H1 (cell line): ENCODE measurements at regions of chr2 and their contacts with region 1.

Region 1: DNA sequence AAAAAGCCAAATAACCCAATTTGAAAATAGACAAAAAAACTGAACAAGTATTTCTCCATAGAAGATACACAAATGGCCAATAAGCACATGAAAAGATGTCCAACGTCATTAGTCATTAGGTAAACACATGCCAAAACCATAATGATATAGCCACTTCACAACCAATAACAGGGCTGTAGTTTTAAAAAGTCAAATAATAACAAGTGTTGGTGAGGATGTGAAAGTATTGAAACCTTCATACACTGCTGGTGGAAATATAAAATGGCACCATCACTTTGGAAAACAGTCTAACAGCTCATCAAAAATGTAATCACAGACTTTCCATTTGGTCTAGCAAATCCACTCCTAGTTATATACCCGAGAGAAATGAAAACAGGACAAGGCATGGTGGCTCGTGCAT is 144.2 kb upstream of the CYP1B1 start:
- DNase-seq: no peak
- H3K4me3 ChIP-seq: no peak overlapping the region
- H3K27ac ChIP-seq: no peak overlapping the region
- H3K4me1 ChIP-seq: peaks cover 1 to 10% (median 2%) of the 10 kb centered on the region in 4 experiments; a peak in 5 of 7 replicates
- H3K27me3 ChIP-seq: no peaks in the 10 kb centered on the region
- CTCF ChIP-seq: no peak
- EP300 ChIP-seq: no peak
- POLR2A ChIP-seq: no peak
- RAD21 ChIP-seq: no peak

Region 2: DNA sequence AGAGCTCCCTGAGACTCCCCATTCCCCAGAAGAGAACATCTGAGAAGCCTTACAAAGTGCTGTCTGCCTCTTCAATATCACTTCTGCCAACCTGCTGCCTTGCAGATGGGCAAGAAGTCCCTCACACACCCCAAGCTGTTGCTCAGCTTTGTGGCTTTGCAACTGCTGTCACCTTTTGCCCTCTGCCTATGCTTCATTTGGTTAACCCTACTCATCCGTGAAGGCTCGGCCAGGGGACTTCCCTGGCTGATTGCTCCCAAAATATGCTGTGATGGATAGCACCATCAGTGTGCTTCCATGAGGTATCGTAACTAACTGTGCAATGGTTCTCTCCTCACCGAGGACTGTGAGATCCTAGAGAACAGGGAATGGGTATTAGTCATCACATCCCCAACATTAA is 55.3 kb before region 1 on chr2:
- CTCF ChIA-PET with region 1: no interaction called
- POLR2A ChIA-PET with region 1: no interaction called
- DNase-seq: no peak
- H3K4me3 ChIP-seq: no peak overlapping the region
- H3K27ac ChIP-seq: no peak overlapping the region
- H3K4me1 ChIP-seq: peaks cover 0 to 3% (median under 1%) of the 10 kb centered on the region in 4 experiments; a peak in 2 of 7 replicates
- H3K27me3 ChIP-seq: peaks cover 0 to 1% (median 0%) of the 10 kb centered on the region in 4 experiments; a peak in 1 of 7 replicates
- CTCF ChIP-seq: no peak
- EP300 ChIP-seq: no peak
- POLR2A ChIP-seq: no peak
- RAD21 ChIP-seq: no peak

Region 3: DNA sequence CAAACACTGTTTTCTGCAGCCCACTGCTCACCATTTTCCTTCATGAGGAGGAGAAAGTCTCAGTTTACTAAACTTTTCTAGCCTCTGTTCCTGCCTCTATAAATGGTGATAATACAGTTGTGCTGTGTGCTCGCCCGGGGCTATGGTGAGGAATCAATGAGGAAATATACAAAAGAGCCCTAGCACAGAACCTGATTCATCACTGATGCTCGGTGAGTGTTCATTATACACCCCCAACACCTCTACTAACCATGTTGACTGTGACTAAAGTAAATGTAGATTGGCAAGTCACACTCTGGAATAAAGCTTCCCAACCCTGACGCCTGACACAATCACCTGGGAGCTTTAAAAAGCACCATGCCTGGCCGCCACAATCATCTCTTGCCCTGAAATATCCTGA is 25.4 kb before region 1 on chr2:
- CTCF ChIA-PET with region 1: no interaction called
- POLR2A ChIA-PET with region 1: no interaction called
- DNase-seq: no peak
- H3K4me3 ChIP-seq: no peak overlapping the region
- H3K27ac ChIP-seq: no peak overlapping the region
- H3K4me1 ChIP-seq: peaks cover 0 to 5% (median 3%) of the 10 kb centered on the region in 4 experiments; a peak in 4 of 7 replicates
- H3K27me3 ChIP-seq: peaks cover 0 to 1% (median 0%) of the 10 kb centered on the region in 4 experiments; a peak in 1 of 7 replicates
- CTCF ChIP-seq: no peak
- EP300 ChIP-seq: no peak
- POLR2A ChIP-seq: no peak
- RAD21 ChIP-seq: no peak

Region 4: DNA sequence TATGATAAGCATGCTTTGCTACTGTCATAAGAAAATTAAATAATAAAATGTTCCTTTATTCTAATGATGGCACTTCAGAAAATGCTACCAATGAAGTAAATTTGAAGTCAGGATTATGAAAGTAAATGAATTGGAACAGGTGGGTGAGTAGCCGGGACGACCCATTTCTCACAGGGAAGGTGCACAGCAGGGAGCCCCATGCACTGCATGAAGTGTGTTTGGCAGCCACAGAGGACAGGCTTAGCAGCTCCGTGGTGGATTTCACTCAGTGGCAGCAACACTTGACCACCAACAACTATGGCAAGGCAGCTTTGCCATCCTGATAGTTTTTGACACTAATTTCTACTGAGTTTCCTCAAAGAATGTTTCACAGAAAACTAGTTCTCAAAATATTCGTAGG is 10.6 kb after region 1 on chr2:
- CTCF ChIA-PET with region 1: interaction called, 11 read pairs
- POLR2A ChIA-PET with region 1: interaction called, 3 read pairs
- DNase-seq: no peak
- H3K4me3 ChIP-seq: no peak overlapping the region
- H3K27ac ChIP-seq: no peak overlapping the region
- H3K4me1 ChIP-seq: no peaks in the 10 kb centered on the region
- H3K27me3 ChIP-seq: no peaks in the 10 kb centered on the region
- CTCF ChIP-seq: no peak
- EP300 ChIP-seq: no peak
- POLR2A ChIP-seq: no peak
- RAD21 ChIP-seq: no peak

Region 5: DNA sequence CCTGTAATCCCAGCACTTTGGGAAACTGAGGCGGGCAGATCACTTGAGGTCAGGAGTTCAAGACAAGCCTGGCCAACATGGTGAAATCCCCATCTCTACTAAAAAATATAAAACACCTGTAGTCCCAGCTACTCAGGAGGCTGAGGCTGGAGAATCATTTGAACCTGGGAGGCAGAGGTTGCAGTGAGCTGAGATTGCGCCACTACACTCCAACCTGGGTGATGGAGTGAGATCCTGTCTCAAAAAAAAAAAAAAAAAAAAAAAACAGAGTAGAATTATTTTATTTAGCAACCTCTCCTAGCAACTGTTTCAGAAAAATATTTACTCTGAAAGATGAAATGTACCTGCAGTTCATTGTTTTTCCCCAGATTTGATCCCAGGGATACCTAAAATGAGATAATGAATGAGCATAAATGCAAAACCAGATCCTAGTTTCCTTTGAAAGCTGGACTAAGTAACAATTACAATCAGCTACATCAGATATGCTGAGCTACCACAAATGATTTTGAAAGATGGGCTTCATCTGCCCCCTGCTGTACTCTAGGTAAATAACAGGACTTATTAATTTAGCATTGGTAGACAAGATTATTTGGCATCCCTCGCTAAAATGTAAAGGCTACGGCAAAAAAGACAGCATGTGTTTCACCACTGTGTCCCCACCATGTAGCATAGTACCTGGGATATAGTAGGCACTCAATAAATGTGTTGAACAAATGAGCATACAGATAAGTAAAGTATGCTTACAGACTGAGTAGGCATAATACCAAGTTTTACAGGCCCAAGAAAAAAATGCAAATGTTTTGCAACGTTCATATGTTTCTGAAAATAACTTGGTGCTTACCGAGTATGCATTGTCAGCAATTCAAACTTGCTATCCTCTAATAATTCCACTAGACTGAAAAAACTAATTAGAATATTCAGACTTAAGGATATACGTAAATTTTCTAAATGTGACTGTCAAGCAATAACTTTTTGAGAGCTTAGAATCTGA is 54.4 kb after region 1 on chr2:
- CTCF ChIA-PET with region 1: no interaction called
- POLR2A ChIA-PET with region 1: no interaction called
- DNase-seq: no peak
- H3K4me3 ChIP-seq: no peak overlapping the region
- H3K27ac ChIP-seq: no peak overlapping the region
- H3K4me1 ChIP-seq: peaks cover 2 to 20% (median 14%) of the 10 kb centered on the region in 4 experiments; a peak in 5 of 7 replicates
- H3K27me3 ChIP-seq: no peaks in the 10 kb centered on the region
- CTCF ChIP-seq: peak in 2 of 3 experiments; percentile 39 to 49; a peak in 2 of 4 replicates
- EP300 ChIP-seq: no peak
- POLR2A ChIP-seq: no peak
- RAD21 ChIP-seq: peak; percentile 84 to 85

Region 6: DNA sequence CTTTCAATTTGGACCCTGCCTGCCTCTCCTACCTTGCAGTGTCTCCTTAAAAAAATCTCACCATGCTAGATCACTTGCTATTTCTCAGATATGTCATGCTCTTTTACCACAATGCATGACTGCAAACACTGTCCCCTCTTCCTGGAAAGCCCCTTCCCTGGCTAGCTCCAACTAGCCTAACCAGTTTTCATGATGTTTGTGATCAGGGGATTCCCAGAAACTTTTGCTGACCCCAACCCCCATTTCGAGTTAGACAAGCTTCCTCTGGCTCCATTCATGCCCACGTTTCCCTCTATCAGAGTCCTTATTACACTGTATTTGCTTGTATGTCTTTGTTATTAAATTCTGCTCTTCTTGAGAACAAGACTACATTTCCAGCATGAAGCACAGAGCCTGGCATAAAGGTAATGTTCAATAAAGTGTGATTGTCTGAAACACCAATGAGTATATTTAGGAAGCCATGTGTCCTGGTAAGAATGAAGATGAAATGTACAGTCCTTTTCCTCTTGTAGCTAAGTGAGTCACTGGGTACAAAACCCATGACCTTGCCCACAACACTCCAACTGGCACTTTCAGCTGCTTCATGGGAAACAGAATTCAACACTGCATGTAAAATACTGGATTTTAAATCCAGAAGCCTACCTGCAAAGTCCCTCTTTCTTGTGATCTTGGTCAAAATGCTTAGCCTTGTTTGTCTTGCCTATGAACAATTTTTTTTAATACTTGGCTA is 218.9 kb after region 1 on chr2:
- CTCF ChIA-PET with region 1: no interaction called
- POLR2A ChIA-PET with region 1: no interaction called
- DNase-seq: no peak
- H3K4me3 ChIP-seq: no peak overlapping the region
- H3K27ac ChIP-seq: no peak overlapping the region
- H3K4me1 ChIP-seq: peaks cover 4 to 19% (median 14%) of the 10 kb centered on the region in 4 experiments; a peak in 6 of 7 replicates
- H3K27me3 ChIP-seq: no peaks in the 10 kb centered on the region; a peak in 1 of 7 replicates
- CTCF ChIP-seq: no peak
- EP300 ChIP-seq: peak in 1 of 2 experiments; percentile 43; a peak in 1 of 3 replicates
- POLR2A ChIP-seq: no peak
- RAD21 ChIP-seq: no peak